ENCODE measurements at regions of chr5 and their contacts with region 1.

Region 1: DNA sequence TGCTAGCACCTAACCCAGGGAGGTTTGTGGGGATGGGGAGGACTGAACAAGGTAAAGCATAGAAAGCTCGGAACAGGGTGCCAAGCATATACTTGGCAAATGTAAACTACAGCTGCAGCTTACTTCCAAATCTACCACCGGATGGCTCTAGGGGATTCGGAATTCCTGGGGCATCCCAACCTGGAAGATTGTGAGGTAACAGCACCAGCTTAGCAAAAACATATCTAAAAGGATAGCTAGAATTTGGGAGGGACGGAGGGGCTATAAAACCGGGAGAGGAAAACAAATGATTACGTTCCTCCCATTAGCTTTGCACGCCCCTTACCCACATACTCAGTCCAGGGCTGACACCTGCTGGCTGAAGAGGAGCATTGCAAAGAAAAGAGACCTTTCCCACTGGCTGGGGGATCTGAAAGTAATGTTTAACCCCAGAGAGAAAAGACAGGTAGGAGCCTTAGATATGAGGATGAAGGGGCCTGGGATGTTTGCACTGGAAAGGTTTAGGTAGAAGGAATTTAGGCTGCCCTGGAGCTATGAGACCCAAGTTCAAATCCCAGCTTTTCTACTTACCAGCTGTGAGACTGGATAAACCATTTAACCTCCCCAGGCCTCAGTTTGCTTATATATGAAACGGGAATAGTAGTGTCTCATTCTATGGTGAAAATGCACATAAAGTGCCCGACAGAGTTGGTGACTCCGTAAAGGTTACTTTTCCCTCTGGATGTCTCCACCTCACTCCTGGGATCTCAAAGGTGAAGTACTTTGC is 73.6 kb downstream of the FAM114A2 start:
- DNase-seq: peak; percentile 13
- ATAC-seq: peak; percentile 88
- H3K4me3 ChIP-seq: no peak overlapping the region
- H3K27ac ChIP-seq: no peak overlapping the region
- H3K4me1 ChIP-seq: no peaks in the 10 kb centered on the region
- H3K27me3 ChIP-seq: no peaks in the 10 kb centered on the region; a peak in 1 of 4 replicates
- CTCF ChIP-seq: peak; percentile 82 to 95 (median 89)
- EP300 ChIP-seq: no peak
- POLR2A ChIP-seq: no peak
- RAD21 ChIP-seq: peak; percentile 99

Region 2: DNA sequence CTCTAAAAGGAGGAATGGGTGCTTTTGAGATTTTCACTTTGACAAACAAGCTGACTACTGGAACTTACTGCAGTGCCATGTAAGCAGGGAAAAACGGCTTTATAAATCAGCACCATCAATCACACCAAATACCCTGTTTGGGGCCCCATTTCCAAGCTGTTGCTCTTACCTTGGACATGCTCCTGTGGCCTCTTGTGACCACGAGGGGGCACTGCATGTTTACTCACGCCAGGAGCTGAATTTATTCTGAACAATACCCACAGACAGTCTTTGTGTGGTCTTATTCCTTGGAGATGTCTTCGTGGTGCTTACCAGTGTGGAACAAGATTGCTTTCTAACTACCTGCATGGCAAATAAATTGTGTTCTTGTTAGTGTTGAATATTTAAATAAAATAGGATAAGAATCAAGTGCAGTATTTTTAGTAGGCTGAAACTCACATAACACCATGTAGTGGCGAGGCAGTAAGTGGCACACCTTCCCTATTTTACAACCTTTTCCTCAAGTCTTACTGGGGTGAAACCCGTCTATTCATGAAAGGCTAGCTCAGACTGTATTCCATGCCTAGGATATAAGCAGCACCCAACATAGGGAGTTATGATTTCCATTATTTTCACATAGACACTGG is 1404.4 kb before region 1 on chr5:
- CTCF ChIA-PET with region 1: interaction called, 45 read pairs
- POLR2A ChIA-PET with region 1: no interaction called
- RAD21 ChIA-PET with region 1: interaction called, 13 read pairs
- SMC1A ChIA-PET with region 1: interaction called, 8 read pairs
- in situ Hi-C with region 1: no loop called
- intact Hi-C with region 1: loop called (anchors 1 kb)
- DNase-seq: no peak
- ATAC-seq: peak; percentile 90
- H3K4me3 ChIP-seq: no peak overlapping the region
- H3K27ac ChIP-seq: no peak overlapping the region
- H3K4me1 ChIP-seq: no peaks in the 10 kb centered on the region
- H3K27me3 ChIP-seq: no peaks in the 10 kb centered on the region
- CTCF ChIP-seq: peak; percentile 73 to 75 (median 74)
- EP300 ChIP-seq: no peak
- POLR2A ChIP-seq: no peak
- RAD21 ChIP-seq: peak; percentile 83

Region 3: DNA sequence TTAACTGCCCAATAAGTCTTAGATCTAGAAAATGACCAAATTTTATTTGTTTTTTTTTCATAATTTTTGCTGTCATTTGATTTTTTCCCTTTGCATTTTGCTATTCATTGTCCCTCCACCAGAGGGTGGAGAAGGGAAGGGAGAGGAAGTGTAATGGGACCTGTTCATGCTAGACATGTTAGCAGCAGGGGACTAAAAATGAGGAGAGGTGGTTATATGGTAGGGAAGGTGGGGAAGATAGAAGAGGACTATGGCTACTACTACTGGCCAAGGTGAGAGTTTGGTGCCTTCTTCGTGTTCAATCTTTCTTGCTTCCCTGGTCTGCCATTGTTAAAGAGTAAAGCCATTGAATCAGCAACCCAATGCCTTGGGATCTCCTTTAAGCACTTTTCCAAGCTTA is 468.2 kb before region 1 on chr5:
- CTCF ChIA-PET with region 1: interaction called, 65 read pairs
- POLR2A ChIA-PET with region 1: no interaction called
- RAD21 ChIA-PET with region 1: interaction called, 25 read pairs
- SMC1A ChIA-PET with region 1: interaction called, 22 read pairs
- in situ Hi-C with region 1: no loop called
- intact Hi-C with region 1: loop called (anchors 1 kb)
- DNase-seq: no peak
- ATAC-seq: peak; percentile 57; the same call in 2 of the 3 replicates
- H3K4me3 ChIP-seq: no peak overlapping the region
- H3K27ac ChIP-seq: no peak overlapping the region
- H3K4me1 ChIP-seq: no peaks in the 10 kb centered on the region
- H3K27me3 ChIP-seq: no peaks in the 10 kb centered on the region; a peak in 1 of 4 replicates
- CTCF ChIP-seq: peak; percentile 52 to 68 (median 55)
- EP300 ChIP-seq: no peak
- POLR2A ChIP-seq: no peak
- RAD21 ChIP-seq: peak; percentile 88

Region 4: GRCh38 chr5:153900703-153901395 is 64.2 kb before region 1 on chr5:
- CTCF ChIA-PET with region 1: no interaction called
- POLR2A ChIA-PET with region 1: no interaction called
- RAD21 ChIA-PET with region 1: no interaction called
- SMC1A ChIA-PET with region 1: no interaction called
- in situ Hi-C with region 1: no loop called
- intact Hi-C with region 1: no loop called
- DNase-seq: no peak
- ATAC-seq: no peak
- H3K4me3 ChIP-seq: no peak overlapping the region
- H3K27ac ChIP-seq: no peak overlapping the region
- H3K4me1 ChIP-seq: 0 out of 2 replicates have a peak, but pooled peaks cover under 1% of the 10 kb centered on the region
- H3K27me3 ChIP-seq: no peaks in the 10 kb centered on the region
- CTCF ChIP-seq: no peak
- EP300 ChIP-seq: no peak
- POLR2A ChIP-seq: no peak
- RAD21 ChIP-seq: no peak

Region 5: DNA sequence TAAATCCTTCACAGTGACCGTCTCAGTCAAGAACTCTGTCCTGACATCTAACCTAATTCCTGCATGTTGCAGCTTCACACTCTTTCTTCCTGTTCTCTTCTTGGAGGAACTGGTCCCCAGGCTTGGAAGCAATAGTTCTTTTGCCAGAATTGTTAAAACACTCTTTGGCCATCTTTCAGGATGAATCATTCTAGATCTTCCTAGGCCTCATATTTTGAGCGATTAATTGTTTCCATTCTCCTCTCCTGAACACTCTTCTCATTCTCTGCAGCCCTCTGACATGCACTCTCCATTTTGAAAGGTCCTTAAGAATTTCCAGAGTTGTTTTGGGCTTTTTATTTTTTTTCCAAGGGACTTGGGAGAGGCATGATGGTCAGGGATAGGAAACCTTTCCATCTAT is 12.2 kb before region 1 on chr5:
- CTCF ChIA-PET with region 1: interaction called, 11 read pairs
- POLR2A ChIA-PET with region 1: no interaction called
- RAD21 ChIA-PET with region 1: interaction called, 5 read pairs
- SMC1A ChIA-PET with region 1: interaction called, 10 read pairs
- in situ Hi-C with region 1: no loop called
- intact Hi-C with region 1: no loop called
- DNase-seq: no peak
- ATAC-seq: no peak
- H3K4me3 ChIP-seq: no peak overlapping the region
- H3K27ac ChIP-seq: no peak overlapping the region
- H3K4me1 ChIP-seq: no peaks in the 10 kb centered on the region
- H3K27me3 ChIP-seq: no peaks in the 10 kb centered on the region; a peak in 1 of 4 replicates
- CTCF ChIP-seq: no peak
- EP300 ChIP-seq: no peak
- POLR2A ChIP-seq: no peak
- RAD21 ChIP-seq: no peak

Measured in GM12878 (cell line).